HepG2 (cell line): ENCODE measurements at regions of chr11 and their contacts with region 1.

Region 1: DNA sequence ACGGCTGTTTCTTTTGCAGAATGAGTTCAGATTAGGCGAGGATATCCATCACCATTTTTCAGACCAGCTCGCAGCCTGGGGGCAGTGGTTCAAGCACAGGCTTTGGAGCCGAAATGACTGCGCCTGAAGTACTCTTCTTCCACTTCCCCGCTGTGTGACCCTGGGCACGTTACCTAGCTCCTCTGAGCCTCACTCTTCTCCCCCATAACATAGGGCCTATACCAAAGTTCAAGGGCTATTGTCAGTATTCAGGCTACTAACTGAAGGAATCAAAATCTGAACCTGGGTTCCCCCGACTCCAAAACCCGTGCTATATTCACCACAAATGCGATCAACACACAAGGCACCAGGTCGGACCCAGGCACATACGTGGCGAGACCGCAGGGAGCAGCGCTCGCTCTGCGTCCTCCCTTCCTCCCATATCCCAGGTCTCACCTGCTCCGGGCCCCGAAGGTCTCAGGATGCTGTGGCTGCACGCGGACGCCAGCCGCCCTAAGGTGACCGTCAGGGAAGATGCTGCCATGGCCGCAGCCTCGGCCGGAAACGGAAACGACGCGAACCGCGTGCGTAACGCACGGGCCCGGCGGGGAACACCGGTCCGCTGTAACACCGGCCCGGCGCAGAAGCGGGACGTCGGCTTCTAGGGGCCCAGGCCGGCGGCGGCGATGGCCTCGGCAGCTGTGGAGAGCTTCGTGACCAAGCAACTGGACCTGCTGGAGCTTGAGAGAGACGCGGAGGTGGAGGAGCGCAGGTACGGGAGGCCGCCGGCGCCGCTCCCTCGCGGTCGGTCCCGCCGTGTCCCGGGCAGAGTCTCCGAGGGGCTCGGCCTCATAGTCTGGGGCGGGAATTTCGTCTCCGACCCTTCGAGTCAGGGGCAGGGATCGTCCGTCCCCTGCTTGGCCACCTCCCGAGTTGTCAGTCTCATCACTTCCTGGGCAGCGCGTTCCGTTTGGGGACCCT is at the starts of genes IGHMBP2 and MRPL21:
- DNase-seq: peak; percentile 62
- ATAC-seq: peak; percentile 95
- H3K4me3 ChIP-seq: peak within 1 kb of the TSS; percentile 71 to 95 (median 83)
- H3K27ac ChIP-seq: peak within 1 kb of the TSS; percentile 74
- H3K4me1 ChIP-seq: peaks cover 32% of the 10 kb centered on the region
- H3K27me3 ChIP-seq: peaks cover 0 to 3% of the 10 kb centered on the region in 2 experiments; a peak in 1 of 5 replicates
- CTCF ChIP-seq: peak; percentile 24; the same call in 1 of the 2 replicates
- EP300 ChIP-seq: peak in 1 of 2 experiments; percentile 14; a peak in 1 of 4 replicates
- POLR2A ChIP-seq: peak; percentile 83 to 95
- RAD21 ChIP-seq: peak; percentile 68
- total RNA-seq, gene IGHMBP2: 5.9 and 9.9 TPM in 2 replicates
- total RNA-seq, gene MRPL21: 100 and 128 TPM in 2 replicates

Region 2: GRCh38 chr11:69088676-69089146 is 185.1 kb after region 1 on chr11:
- CTCF ChIA-PET with region 1: no interaction called
- POLR2A ChIA-PET with region 1: no interaction called
- in situ Hi-C with region 1: no loop called
- intact Hi-C with region 1: loop called (anchors 5 kb)
- DNase-seq: peak; percentile 75
- ATAC-seq: peak; percentile 85
- H3K4me3 ChIP-seq: no peak overlapping the region
- H3K27ac ChIP-seq: no peak overlapping the region
- H3K4me1 ChIP-seq: no peaks in the 10 kb centered on the region
- H3K27me3 ChIP-seq: no peaks in the 10 kb centered on the region
- CTCF ChIP-seq: peak; percentile 90
- EP300 ChIP-seq: no peak
- POLR2A ChIP-seq: no peak
- RAD21 ChIP-seq: peak; percentile 78